ENCODE measurements at regions of chr2 and their contacts with region 1.

Region 1: GRCh38 chr2:102753563-102754159 is 8.2 kb upstream of the TMEM182 start:
- DNase-seq: peak; percentile 53 to 75 (median 72)
- H3K4me3 ChIP-seq: no peak overlapping the region
- H3K27ac ChIP-seq: no peak overlapping the region
- H3K4me1 ChIP-seq: peaks cover 0 to 7% (median 2%) of the 10 kb centered on the region in 4 experiments
- H3K27me3 ChIP-seq: no peaks in the 10 kb centered on the region

Region 2: DNA sequence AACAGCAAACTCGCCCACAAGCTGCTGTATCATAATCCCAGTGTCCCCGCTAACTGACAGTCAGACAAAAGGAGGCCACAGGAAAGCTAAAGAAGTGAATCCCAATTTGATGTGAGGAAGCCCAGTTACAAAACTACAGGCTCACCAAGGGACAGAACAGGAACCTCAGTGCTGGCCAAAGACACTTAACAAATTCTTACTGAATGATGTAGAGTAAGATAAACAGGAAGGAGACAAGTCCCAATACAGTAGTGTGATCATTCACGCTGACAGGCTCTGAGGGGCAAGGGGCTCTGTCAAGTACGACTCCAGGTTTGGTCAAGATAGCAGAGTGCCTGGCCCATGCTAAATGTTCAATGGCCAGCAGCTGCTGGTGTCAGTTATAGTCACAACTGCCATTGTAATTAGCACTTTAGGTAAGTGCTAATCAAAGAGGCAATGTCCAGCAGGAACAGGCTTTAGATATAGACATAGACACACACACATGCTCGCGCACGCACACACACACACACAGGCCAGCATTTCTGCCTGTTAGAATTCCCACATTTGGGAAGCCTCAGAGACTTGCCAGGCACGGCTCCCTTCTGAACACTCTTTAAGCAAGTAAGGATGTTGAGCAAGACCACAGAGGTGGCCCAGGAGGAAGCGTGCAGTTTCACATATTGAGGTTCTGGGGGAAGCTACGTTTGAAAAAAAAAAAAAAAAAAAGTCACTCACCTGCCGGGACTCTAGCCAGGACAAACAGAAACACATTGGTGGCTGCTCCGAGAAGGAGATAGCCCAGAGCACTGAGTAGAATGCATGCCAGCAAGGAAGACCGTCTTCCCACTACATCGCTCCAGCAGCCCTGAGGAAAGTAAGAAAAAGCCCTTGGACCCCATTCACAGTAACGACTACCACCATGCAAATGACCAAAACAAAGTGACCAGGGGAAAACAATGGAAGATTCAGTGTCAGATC is 27.3 kb before region 1 on chr2:
- CTCF ChIA-PET with region 1: no interaction called
- POLR2A ChIA-PET with region 1: no interaction called
- DNase-seq: no peak
- H3K4me3 ChIP-seq: no peak overlapping the region
- H3K27ac ChIP-seq: no peak overlapping the region
- H3K4me1 ChIP-seq: no peaks in the 10 kb centered on the region
- H3K27me3 ChIP-seq: no peaks in the 10 kb centered on the region

Region 3: GRCh38 chr2:102736410-102737409 is 17.0 kb before region 1 on chr2:
- CTCF ChIA-PET with region 1: interaction called, 33 read pairs
- POLR2A ChIA-PET with region 1: no interaction called
- DNase-seq: peak; percentile 74 to 88 (median 83)
- H3K4me3 ChIP-seq: peak overlapping the region; percentile 85 to 97 (median 91)
- H3K27ac ChIP-seq: peak overlapping the region in 1 of 2 experiments; percentile 77
- H3K4me1 ChIP-seq: peaks cover 17 to 31% (median 24%) of the 10 kb centered on the region in 4 experiments
- H3K27me3 ChIP-seq: no peaks in the 10 kb centered on the region

Region 4: GRCh38 chr2:102788885-102789260 is 35.2 kb after region 1 on chr2:
- CTCF ChIA-PET with region 1: no interaction called
- POLR2A ChIA-PET with region 1: no interaction called
- DNase-seq: no peak
- H3K4me3 ChIP-seq: no peak overlapping the region
- H3K27ac ChIP-seq: no peak overlapping the region
- H3K4me1 ChIP-seq: no peaks in the 10 kb centered on the region
- H3K27me3 ChIP-seq: no peaks in the 10 kb centered on the region

Region 5: DNA sequence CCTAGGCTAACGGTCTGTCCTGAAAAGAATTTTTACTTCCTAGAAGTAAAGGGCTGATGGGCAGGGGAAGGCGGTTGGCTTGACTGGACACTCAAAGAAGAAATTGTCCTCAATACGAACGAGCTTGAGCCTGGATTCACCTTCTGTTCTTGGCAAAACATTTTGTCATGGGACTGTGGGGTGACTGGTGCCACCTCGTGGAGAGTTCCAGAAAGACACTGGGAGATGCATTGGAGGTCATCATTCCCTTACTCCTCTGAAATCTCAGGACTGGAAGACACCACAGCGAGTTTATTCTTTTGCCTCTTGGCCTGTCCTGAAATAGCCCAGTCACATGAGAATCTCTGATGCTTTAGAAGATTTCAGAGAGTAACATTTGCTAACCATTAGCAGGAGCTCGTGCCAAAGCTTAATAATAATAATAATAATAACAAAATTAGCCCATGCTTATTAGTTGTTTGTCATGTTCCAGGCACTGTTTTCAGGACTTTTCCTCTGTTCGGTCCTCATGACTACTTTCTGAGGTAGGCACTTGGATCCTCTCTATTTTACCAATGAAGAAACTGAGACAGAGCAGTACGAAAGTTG is 52.7 kb after region 1 on chr2:
- CTCF ChIA-PET with region 1: interaction called, 38 read pairs
- POLR2A ChIA-PET with region 1: no interaction called
- DNase-seq: peak; percentile 32 to 48 (median 34)
- H3K4me3 ChIP-seq: no peak overlapping the region
- H3K27ac ChIP-seq: no peak overlapping the region
- H3K4me1 ChIP-seq: peaks cover 0 to 12% (median 3%) of the 10 kb centered on the region in 4 experiments
- H3K27me3 ChIP-seq: no peaks in the 10 kb centered on the region

Region 6: GRCh38 chr2:102895399-102895798 is 141.7 kb after region 1 on chr2:
- CTCF ChIA-PET with region 1: no interaction called
- POLR2A ChIA-PET with region 1: no interaction called
- DNase-seq: peak; percentile 7 to 67 (median 60)
- H3K4me3 ChIP-seq: no peak overlapping the region
- H3K27ac ChIP-seq: no peak overlapping the region
- H3K4me1 ChIP-seq: peaks cover 0 to 40% (median 11%) of the 10 kb centered on the region in 4 experiments
- H3K27me3 ChIP-seq: no peaks in the 10 kb centered on the region